ENCODE measurements at regions of chr9 and their contacts with region 1.

Region 1: GRCh38 chr9:6764523-6764922 is 6.8 kb downstream of the KDM4C start:
- DNase-seq: no peak
- ATAC-seq: no peak; the same call in 2 of the 3 replicates
- H3K4me3 ChIP-seq: no peak overlapping the region
- H3K27ac ChIP-seq: no peak overlapping the region
- H3K4me1 ChIP-seq: no peaks in the 10 kb centered on the region; the same call in 1 of the 2 replicates
- H3K27me3 ChIP-seq: no peaks in the 10 kb centered on the region
- CTCF ChIP-seq: no peak
- EP300 ChIP-seq: no peak
- POLR2A ChIP-seq: no peak
- RAD21 ChIP-seq: no peak

Region 2: GRCh38 chr9:6488395-6488794 is 276.1 kb before region 1 on chr9:
- CTCF ChIA-PET with region 1: no interaction called
- POLR2A ChIA-PET with region 1: interaction called, 11 read pairs
- RAD21 ChIA-PET with region 1: no interaction called
- SMC1A ChIA-PET with region 1: no interaction called
- in situ Hi-C with region 1: no loop called
- intact Hi-C with region 1: no loop called
- DNase-seq: no peak
- ATAC-seq: no peak
- H3K4me3 ChIP-seq: no peak overlapping the region
- H3K27ac ChIP-seq: no peak overlapping the region
- H3K4me1 ChIP-seq: no peaks in the 10 kb centered on the region
- H3K27me3 ChIP-seq: no peaks in the 10 kb centered on the region
- CTCF ChIP-seq: no peak
- EP300 ChIP-seq: no peak
- POLR2A ChIP-seq: no peak
- RAD21 ChIP-seq: peak; percentile 30; the same call in 1 of the 2 replicates

Region 3: DNA sequence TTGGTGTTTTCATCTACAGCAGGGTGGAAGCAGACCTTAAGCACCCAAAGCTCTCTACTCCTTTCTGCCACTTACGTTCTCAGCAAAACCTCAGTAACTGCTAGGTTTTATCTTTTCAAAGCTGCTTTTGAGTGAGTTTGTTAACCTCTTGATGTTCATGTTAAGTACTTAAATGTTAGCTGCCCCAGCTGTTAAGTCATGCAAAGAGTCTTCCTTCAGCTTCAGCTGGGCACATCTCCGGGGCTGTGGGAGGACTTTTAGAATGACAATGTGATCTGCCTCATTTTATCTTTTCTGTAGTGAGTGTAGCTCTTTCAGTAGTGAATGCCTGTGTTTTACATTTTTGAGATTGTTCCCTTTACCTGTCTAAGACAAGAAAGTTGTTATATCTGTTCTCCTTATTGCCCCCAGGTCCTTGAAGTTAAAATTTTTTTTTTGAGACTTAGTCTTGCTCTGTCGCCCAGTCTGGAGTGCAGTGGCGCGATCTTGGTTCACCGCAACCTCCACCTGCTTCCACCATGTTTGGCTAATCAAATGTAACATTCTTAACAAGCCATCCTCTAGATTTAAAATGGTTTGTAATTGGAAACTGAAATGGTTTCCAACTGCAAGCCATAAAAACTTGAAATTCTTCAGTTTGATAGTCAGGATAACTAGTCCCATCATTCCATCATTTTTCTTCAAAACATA is 12.8 kb after region 1 on chr9:
- CTCF ChIA-PET with region 1: no interaction called
- POLR2A ChIA-PET with region 1: interaction called, 3 read pairs
- RAD21 ChIA-PET with region 1: interaction called, 3 read pairs
- SMC1A ChIA-PET with region 1: interaction called, 15 read pairs
- in situ Hi-C with region 1: no loop called
- intact Hi-C with region 1: no loop called
- DNase-seq: no peak
- ATAC-seq: peak; percentile 58
- H3K4me3 ChIP-seq: no peak overlapping the region
- H3K27ac ChIP-seq: peak overlapping the region; percentile 56; the same call in 1 of the 2 replicates
- H3K4me1 ChIP-seq: peaks cover 22% of the 10 kb centered on the region
- H3K27me3 ChIP-seq: no peaks in the 10 kb centered on the region
- CTCF ChIP-seq: no peak
- EP300 ChIP-seq: no peak
- POLR2A ChIP-seq: no peak
- RAD21 ChIP-seq: no peak

Measured in GM12878 (cell line).